Aorta (tissue), 5 donors: ENCODE measurements at regions of chr19 and their contacts with region 1.

Region 1: DNA sequence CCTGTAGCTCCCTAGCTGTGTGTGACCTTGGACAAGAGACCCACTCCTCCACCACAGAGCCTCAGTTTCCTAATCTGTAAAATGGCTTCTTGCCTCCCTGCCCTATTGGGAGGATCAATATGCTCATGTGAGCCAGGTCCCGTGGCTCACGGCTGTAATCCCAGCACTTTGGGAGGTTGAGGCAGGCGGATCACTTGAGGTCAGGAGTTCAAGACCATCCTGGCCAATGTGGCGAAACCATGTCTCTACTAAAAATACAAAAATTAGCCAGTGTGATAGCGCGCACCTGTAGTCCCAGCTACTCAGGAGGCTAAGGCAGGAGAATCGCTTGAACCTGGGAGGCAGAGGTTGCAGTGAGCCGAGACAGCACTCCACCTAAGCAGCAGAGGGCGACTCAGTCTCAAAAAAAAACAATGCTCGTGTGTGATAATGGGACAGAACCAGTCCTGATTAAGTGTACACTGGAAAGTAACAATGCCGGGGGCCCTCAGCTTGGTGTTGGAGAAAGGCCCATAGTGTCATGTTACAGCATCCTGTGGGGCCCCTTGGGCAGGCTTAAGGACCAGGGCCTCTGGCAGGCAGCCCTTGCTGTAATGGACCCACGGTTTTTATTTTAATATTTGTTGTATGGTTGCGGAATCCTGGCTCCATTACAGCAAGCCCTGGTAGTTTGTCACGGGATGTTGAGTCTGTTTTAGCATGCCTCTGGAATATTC is 6.8 kb downstream of the RPS11 start:
- DNase-seq: no peak
- ATAC-seq: peak; percentile 51
- H3K4me3 ChIP-seq: no peak overlapping the region
- H3K27ac ChIP-seq: no peak overlapping the region
- H3K4me1 ChIP-seq: no peaks in the 10 kb centered on the region
- H3K27me3 ChIP-seq: no peaks in the 10 kb centered on the region

Region 2: DNA sequence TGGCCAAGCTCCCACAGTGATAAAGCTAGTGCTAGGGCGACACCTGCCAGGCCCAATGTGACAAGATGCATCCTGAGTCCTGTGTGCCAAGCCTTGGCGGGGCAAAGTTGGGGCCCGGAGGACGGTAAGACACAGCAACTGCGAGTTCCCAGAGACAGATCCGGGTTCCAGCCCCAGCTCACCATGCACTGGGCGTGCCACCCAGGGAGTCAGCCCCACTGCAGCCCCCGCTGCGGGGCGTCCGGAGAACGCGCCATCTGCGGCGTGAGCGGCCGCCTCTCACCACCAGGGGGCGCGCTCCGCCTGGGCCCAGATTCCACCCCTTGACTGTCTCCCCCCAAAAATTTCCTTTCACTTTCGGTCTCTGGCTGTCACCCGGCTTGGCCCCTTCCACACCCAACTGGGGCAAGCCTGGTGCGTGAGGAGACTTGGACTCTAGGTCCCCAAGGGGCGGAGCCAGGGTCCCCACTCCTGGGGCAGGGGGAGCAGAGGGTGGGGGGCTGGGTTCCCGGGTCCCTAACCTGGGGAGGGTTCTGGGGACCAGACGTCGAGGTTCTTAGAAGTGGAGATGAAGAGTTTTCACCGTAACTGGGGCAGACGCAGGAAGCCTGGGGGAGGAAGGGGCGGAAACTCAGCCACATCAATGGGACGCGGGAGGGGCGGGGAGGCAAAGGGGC is 29.0 kb before region 1 on chr19 and contains the start of gene FLT3LG:
- intact Hi-C with region 1: no loop called
- DNase-seq: peak; percentile 88 to 93
- ATAC-seq: peak; percentile 89
- H3K4me3 ChIP-seq: peak within 1 kb of the TSS; percentile 85 to 86
- H3K27ac ChIP-seq: no peak within 1 kb of the TSS
- H3K4me1 ChIP-seq: no peaks in the 10 kb centered on the region
- H3K27me3 ChIP-seq: no peaks in the 10 kb centered on the region
- total RNA-seq, gene FLT3LG: 6.3 to 17.6 TPM

Region 3: GRCh38 chr19:49546825-49547565 is 44.0 kb after region 1 on chr19:
- intact Hi-C with region 1: loop called in 1 of 2 experiments (anchors 2 kb)
- DNase-seq: no peak
- ATAC-seq: peak; percentile 88
- H3K4me3 ChIP-seq: no peak overlapping the region
- H3K27ac ChIP-seq: no peak overlapping the region
- H3K4me1 ChIP-seq: no peaks in the 10 kb centered on the region
- H3K27me3 ChIP-seq: no peaks in the 10 kb centered on the region

Region 4: GRCh38 chr19:49570138-49570856 is 67.3 kb after region 1 on chr19:
- intact Hi-C with region 1: loop called in 1 of 2 experiments (anchors 2 kb)
- DNase-seq: no peak
- ATAC-seq: peak; percentile 87
- H3K4me3 ChIP-seq: no peak overlapping the region
- H3K27ac ChIP-seq: no peak overlapping the region
- H3K4me1 ChIP-seq: no peaks in the 10 kb centered on the region
- H3K27me3 ChIP-seq: no peaks in the 10 kb centered on the region

Region 5: GRCh38 chr19:49599378-49600295 is 96.6 kb after region 1 on chr19:
- intact Hi-C with region 1: no loop called
- DNase-seq: no peak
- ATAC-seq: no peak
- H3K4me3 ChIP-seq: no peak overlapping the region
- H3K27ac ChIP-seq: no peak overlapping the region
- H3K4me1 ChIP-seq: no peaks in the 10 kb centered on the region
- H3K27me3 ChIP-seq: no peaks in the 10 kb centered on the region